ENCODE measurements at regions of chrX and their contacts with region 1.

Region 1: GRCh38 chrX:15335135-15336022 is at the start of gene PIGA:
- DNase-seq: peak; percentile 90
- ATAC-seq: peak; percentile 100
- H3K4me3 ChIP-seq: peak within 1 kb of the TSS; percentile 77 to 85 (median 80)
- H3K27ac ChIP-seq: peak within 1 kb of the TSS; percentile 72
- H3K4me1 ChIP-seq: peaks cover 7% of the 10 kb centered on the region; the same call in 1 of the 2 replicates
- H3K27me3 ChIP-seq: no peaks in the 10 kb centered on the region; a peak in 1 of 5 replicates
- CTCF ChIP-seq: no peak
- EP300 ChIP-seq: no peak
- POLR2A ChIP-seq: peak; percentile 74 to 85
- RAD21 ChIP-seq: no peak
- total RNA-seq, gene PIGA: 13.0 and 19.9 TPM in 2 replicates

Region 2: DNA sequence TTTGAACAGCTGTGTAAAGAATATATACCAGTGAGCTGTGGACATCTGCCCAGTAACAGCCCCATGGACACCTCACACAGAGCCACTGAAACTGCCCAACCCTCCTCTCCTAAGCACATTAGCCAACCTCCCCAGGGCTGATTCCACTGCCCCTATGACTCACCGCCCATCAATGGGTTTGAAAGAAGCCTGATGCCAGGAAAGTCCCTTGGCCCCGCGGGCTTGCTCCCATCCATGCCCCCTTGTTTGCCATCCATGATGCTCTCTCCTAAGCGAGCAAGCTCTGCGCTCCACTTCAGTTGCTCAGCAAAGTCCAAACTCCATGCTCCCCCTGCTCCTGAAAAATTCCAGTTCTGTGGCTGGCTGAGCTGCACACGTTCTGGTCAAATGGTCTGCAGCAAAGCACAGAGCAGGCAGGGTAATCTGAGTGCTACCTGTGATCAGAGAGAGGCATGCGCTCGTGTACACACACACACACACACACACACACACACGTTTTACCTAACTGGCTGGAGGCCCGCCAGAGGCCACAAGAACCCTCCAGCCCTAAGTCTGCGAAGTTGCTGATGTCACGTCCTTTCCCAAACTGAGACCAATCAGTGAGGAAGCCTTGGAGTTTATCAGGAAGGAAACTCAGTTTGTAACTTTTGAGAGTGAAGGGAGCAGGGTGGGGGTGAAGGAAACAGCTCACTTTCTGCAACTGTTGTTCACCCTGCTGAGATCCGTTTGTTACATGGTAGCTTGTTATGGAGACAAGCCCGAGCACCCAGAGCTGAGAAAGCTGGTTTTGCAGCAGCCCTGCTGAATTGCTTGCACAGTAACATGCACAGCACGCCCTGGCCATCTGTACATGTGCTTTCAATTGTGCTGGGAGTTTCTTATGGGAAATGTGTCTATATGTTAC is 65.5 kb before region 1 on chrX and contains the start of gene ASB9:
- CTCF ChIA-PET with region 1: no interaction called
- POLR2A ChIA-PET with region 1: no interaction called
- in situ Hi-C with region 1: no loop called
- intact Hi-C with region 1: loop called (anchors 2 kb)
- DNase-seq: peak; percentile 78
- ATAC-seq: peak; percentile 97
- H3K4me3 ChIP-seq: peak within 1 kb of the TSS; percentile 19 to 60 (median 43); a peak in 5 of 6 replicates
- H3K27ac ChIP-seq: peak within 1 kb of the TSS; percentile 82
- H3K4me1 ChIP-seq: peaks cover 40% of the 10 kb centered on the region
- H3K27me3 ChIP-seq: no peaks in the 10 kb centered on the region
- CTCF ChIP-seq: no peak
- EP300 ChIP-seq: peak in 1 of 2 experiments; percentile 52; a peak in 1 of 4 replicates
- POLR2A ChIP-seq: peak in 1 of 2 experiments; percentile 34; a peak in 1 of 4 replicates
- RAD21 ChIP-seq: no peak
- total RNA-seq, gene ASB9: 13.8 and 18.2 TPM in 2 replicates

Region 3: DNA sequence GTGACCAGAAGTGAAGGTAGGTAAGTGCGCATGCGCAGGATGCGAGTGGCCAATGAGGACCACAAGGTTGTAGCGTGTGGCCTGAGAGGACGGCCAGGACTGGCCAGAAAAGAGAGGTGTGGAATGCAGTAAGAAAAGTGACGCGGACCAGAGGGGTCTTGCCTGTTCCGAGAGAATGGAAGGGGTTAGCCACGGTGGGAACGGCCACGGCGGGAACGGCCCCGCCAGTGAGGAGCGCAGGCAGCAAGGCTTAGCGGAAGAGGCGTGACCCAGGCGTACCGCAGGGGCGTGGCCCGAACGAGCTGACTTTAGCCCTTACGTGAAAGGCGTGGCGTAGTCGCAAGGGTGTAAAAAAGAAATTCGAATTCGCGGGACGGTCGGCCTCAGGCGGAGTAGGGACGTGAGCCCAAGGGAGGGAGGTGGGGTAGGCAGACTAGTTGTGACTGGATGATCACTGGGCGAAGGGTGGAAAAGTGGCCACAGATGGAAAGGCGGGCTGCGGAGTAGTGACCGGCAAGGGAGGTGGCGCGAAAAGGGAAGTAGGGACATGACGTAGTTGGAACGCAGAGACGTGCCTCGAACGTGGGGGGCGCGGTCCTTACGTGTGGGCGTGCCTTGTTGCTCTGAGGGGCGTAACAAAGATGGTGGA is 339.6 kb after region 1 on chrX:
- CTCF ChIA-PET with region 1: no interaction called
- POLR2A ChIA-PET with region 1: no interaction called
- in situ Hi-C with region 1: loop called (anchors 25 kb)
- intact Hi-C with region 1: no loop called
- DNase-seq: peak; percentile 91
- ATAC-seq: peak; percentile 94
- H3K4me3 ChIP-seq: peak overlapping the region; percentile 75 to 94 (median 86)
- H3K27ac ChIP-seq: peak overlapping the region; percentile 94
- H3K4me1 ChIP-seq: peaks cover 26% of the 10 kb centered on the region
- H3K27me3 ChIP-seq: no peaks in the 10 kb centered on the region; a peak in 1 of 5 replicates
- CTCF ChIP-seq: no peak
- EP300 ChIP-seq: no peak
- POLR2A ChIP-seq: peak in 1 of 2 experiments; percentile 52; a peak in 3 of 4 replicates
- RAD21 ChIP-seq: no peak

Region 4: DNA sequence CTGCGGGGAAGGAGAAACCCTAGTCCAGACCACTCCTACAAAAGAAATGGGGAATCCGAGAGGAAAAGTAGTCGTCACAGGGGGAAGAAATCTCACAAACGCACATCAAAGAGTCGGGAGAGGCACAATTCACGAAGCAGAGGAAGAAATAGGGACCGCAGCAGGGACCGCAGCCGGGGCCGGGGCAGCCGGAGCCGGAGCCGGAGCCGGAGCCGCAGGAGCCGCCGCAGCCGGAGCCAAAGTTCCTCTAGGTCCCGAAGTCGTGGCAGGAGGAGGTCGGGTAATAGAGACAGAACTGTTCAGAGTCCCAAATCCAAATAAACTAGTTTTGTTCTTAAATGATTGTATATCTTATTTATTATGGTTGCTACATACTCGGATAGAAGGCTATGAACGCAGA is 487.5 kb after region 1 on chrX:
- CTCF ChIA-PET with region 1: no interaction called
- POLR2A ChIA-PET with region 1: no interaction called
- in situ Hi-C with region 1: no loop called
- intact Hi-C with region 1: no loop called
- DNase-seq: no peak
- ATAC-seq: no peak
- H3K4me3 ChIP-seq: no peak overlapping the region
- H3K27ac ChIP-seq: no peak overlapping the region
- H3K4me1 ChIP-seq: no peaks in the 10 kb centered on the region
- H3K27me3 ChIP-seq: no peaks in the 10 kb centered on the region
- CTCF ChIP-seq: no peak
- EP300 ChIP-seq: no peak
- POLR2A ChIP-seq: no peak
- RAD21 ChIP-seq: no peak